Breast epithelium (tissue), 4 donors: ENCODE measurements at regions of chr5 and their contacts with region 1.

Region 1: DNA sequence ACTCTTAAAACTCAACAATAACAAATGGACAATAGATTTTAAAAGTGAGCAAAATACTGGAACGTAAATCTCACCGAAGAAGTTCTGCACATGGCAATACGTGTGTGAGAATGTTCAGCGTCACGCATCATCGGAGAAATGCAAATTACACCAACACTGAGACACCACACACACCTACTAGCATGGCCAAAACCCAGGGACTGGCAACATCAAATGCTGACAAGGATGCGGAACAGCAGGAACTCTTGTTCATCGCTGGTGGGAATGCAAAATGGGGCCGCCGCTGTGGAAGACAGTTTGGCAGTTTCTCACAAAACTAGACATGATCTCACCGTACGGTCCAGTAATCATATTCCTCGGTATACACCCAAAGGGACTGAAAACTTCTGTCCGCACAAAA is 21.6 kb upstream of the CLPTM1L start:
- DNase-seq: no peak
- H3K4me3 ChIP-seq: no peak overlapping the region
- H3K27ac ChIP-seq: no peak overlapping the region
- H3K4me1 ChIP-seq: no peaks in the 10 kb centered on the region
- H3K27me3 ChIP-seq: peaks cover 0 to 51% of the 10 kb centered on the region in 2 donors
- CTCF ChIP-seq: no peak
- POLR2A ChIP-seq: no peak

Region 2: DNA sequence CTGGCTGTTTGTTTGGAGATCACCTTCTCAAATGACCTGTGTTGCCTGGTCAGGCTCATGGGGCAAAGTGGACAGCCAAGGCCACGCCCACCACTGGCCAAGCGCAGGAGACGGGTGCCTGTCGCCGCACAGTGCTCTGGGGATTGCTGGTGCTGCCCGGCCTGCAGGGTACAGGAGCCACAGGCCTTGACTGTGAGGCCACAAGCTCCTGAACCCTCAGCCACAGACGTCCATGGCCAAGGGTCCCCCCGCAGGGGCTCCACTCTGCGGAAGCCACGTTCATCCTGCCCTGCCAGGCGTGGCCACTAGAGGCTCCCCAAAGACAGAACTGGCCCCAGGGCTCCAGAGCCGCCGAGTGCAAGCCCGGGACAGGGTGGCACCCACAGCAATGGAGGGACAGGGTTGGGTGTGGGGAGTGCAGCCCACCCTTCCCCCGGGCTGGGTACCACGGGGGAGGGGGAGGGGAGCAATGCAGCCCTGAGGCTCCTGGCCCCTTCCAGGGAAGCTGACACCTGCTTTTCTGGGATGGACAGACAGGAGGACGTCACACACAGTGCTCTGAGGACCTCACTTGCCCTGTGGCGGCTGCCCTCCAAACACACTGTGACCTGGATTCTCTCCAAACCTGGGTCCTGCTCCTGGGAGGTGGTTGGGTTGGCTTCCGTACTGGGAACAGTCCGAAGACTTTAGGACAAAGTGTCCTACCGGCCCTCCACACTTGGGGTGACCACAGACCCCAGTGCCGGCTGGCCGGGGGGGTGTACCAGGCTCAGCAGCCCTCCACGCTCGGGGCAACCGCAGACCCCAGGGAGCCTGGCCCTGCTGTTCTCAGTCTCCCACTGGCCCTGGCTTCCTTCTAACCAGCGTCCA is 694.8 kb before region 1 on chr5:
- intact Hi-C with region 1: loop called (anchors 5 kb)
- DNase-seq: peak in 1 of 2 donors; percentile 82
- H3K4me3 ChIP-seq: peak overlapping the region in 2 of 3 donors; percentile 23 to 34
- H3K27ac ChIP-seq: no peak overlapping the region
- H3K4me1 ChIP-seq: peaks cover 18 to 23% of the 10 kb centered on the region in 2 donors
- H3K27me3 ChIP-seq: peaks cover 0 to 7% of the 10 kb centered on the region in 2 donors
- CTCF ChIP-seq: peak; percentile 41 to 92 (median 89)
- POLR2A ChIP-seq: no peak

Region 3: DNA sequence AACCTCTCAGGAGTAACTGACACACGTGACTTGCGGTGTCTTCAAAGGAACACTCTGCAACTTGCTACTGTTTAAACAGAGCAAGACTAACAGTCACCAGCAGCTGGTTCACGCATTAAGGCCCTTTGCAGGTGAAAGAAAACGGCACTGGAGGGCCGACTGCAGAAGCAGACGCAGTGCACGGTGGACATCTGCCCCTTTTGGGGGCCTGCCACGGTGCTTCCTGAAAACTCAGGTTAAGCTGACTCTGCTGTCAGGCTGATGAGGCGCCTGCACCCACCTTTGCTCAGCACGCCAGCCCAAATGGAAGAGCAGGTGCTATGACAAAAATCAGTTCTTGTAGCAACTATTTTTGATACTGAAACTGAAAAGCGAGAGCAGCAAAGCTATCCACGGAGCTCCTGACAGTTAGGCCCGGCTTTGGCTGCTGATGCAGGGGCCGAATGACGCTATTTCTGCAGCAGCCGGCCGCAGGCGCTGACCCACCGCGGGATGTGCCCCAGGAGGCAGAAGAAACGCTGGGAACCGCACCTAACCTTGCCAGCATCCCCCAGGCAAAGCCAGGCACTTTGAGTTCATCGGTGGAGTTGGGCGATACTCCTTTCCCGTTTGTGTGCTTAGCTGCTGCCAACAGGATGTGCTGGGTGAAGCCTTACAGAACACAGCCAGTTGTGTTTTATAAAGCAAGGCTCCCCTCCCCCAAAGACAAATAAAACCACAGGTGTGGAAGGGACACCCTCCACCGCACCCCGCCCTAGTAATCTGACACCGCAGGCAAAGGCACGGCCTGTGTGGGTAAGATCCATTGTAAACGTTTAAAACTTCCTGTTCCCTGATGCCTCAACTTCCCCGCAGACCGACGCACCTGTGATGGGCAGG is 50.6 kb before region 1 on chr5:
- intact Hi-C with region 1: no loop called
- DNase-seq: peak; percentile 76 to 77
- H3K4me3 ChIP-seq: peak overlapping the region in 2 of 3 donors; percentile 33 to 36
- H3K27ac ChIP-seq: peak overlapping the region; percentile 80 to 83
- H3K4me1 ChIP-seq: no peaks in the 10 kb centered on the region
- H3K27me3 ChIP-seq: no peaks in the 10 kb centered on the region
- CTCF ChIP-seq: no peak
- POLR2A ChIP-seq: no peak